Activated CD8-positive, alpha-beta T cell treated with anti-CD3 and anti-CD28 coated beads for 36 hours (primary cell): ENCODE measurements at regions of chr9 and their contacts with region 1.

Region 1: DNA sequence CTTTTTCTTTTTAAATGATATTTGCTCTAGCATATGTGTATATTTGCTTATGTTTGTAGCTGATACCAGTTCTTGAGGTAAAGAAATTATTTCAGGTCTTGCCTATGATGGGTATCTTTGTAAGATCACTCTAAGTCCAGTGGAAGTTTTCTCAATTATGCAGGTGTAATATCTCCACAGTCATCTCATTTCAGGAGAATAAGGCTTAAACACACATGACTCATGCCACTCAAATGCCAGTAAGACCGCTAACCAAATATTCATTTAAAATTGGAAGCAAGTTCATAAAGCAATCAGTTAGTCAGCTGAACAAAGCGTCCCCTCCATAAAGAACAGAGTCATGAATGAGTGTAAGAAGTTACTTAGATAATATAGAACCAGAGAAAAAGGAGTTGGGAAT is 248.6 kb downstream of the LURAP1L start:
- DNase-seq: no peak
- ATAC-seq: no peak
- H3K4me3 Mint-ChIP-seq: no peak overlapping the region
- H3K27ac Mint-ChIP-seq: no peak overlapping the region
- H3K4me1 Mint-ChIP-seq: no peaks in the 10 kb centered on the region
- H3K27me3 Mint-ChIP-seq: no peaks in the 10 kb centered on the region
- CTCF ChIP-seq: no peak

Region 2: DNA sequence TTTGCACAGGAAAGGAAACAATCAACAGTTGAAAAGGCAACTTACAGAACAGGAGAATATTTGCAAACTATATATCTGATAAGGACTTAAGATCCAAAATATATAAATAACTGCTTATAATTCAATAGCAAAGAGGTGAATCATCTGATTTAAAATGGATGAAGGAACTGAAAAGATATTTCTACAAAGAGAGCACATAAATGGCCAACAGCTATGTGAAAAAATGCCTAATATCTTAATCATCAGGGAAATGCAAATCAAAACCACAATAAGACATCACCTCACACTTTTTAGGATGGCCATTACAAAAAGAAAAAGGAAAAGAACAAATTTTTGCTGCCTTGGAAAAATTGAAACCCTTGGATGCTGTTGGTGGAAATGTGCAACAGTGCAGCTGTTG is 148.2 kb before region 1 on chr9:
- CTCF ChIA-PET with region 1: no interaction called
- POLR2A ChIA-PET with region 1: no interaction called
- intact Hi-C with region 1: no loop called
- DNase-seq: no peak
- ATAC-seq: no peak
- H3K4me3 Mint-ChIP-seq: no peak overlapping the region
- H3K27ac Mint-ChIP-seq: no peak overlapping the region
- H3K4me1 Mint-ChIP-seq: no peaks in the 10 kb centered on the region
- H3K27me3 Mint-ChIP-seq: no peaks in the 10 kb centered on the region
- CTCF ChIP-seq: no peak

Region 3: DNA sequence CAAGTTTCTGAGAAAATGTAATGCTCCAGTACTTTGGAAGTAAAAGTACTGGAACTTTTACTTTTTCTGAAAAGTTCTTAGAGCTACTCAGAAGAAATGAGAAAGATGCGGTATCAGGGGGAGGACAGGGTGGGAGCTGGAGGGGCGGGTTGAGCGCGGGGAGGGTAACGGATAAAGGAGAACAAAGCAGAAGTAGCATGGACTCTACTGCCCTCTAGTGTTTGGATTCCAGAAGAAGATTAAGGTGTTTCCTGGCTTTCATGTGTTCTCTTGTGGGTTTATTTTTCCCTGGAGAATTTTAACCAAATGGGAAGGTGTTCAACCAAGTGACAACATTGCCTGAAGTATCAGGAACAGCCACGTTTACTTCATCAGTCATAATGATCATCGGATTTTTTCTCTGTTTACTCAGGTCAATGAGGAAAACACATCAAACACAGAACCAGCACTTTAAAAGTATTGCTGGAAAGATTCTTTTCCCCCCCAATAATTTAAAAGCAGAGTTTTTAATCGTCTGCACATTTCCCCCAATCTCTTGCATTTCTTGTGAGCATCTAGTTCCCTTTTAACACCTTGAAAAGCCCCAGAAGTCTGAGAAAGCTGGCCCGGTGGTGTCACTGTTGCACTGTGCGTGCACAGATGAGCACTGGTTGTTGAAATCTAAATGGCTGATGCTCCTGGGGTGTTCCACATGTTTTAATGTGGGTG is 65.4 kb after region 1 on chr9:
- CTCF ChIA-PET with region 1: no interaction called
- POLR2A ChIA-PET with region 1: no interaction called
- intact Hi-C with region 1: loop called (anchors 10 kb)
- DNase-seq: peak; percentile 2
- ATAC-seq: no peak
- H3K4me3 Mint-ChIP-seq: no peak overlapping the region
- H3K27ac Mint-ChIP-seq: no peak overlapping the region
- H3K4me1 Mint-ChIP-seq: no peaks in the 10 kb centered on the region
- H3K27me3 Mint-ChIP-seq: no peaks in the 10 kb centered on the region
- CTCF ChIP-seq: peak; percentile 63

Region 4: DNA sequence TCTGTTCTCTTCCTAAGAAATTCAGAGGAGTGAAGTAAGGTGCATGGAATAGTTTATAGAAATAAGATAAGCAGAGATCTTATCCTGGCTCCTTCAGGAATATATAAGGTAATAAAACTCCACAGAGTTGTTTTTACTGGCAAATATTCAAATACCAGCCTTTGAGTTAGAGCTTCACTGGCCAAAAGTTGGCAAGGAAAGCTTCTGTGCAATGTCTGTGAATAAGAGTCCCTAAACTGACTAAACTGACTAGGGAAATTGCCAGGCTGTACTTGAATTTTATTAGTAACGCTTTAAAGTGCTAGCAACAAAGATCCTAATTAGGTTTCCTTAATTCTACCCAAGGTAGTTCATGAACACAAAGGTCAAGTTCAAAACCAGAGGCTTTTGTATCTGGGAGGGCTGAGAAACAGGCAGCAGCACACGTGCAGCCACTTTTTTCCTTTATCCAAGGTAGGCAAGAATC is 387.1 kb after region 1 on chr9:
- CTCF ChIA-PET with region 1: no interaction called
- POLR2A ChIA-PET with region 1: no interaction called
- intact Hi-C with region 1: no loop called
- DNase-seq: no peak
- ATAC-seq: no peak
- H3K4me3 Mint-ChIP-seq: no peak overlapping the region
- H3K27ac Mint-ChIP-seq: no peak overlapping the region
- H3K4me1 Mint-ChIP-seq: no peaks in the 10 kb centered on the region
- H3K27me3 Mint-ChIP-seq: no peaks in the 10 kb centered on the region
- CTCF ChIP-seq: no peak